Activated CD8-positive, alpha-beta T cell treated with anti-CD3 and anti-CD28 coated beads, Interleukin-2, amount 10 ng/mL, durations not matched to agents 7 days and 5 days (primary cell): ENCODE measurements at regions of chrX and their contacts with region 1.

Region 1: DNA sequence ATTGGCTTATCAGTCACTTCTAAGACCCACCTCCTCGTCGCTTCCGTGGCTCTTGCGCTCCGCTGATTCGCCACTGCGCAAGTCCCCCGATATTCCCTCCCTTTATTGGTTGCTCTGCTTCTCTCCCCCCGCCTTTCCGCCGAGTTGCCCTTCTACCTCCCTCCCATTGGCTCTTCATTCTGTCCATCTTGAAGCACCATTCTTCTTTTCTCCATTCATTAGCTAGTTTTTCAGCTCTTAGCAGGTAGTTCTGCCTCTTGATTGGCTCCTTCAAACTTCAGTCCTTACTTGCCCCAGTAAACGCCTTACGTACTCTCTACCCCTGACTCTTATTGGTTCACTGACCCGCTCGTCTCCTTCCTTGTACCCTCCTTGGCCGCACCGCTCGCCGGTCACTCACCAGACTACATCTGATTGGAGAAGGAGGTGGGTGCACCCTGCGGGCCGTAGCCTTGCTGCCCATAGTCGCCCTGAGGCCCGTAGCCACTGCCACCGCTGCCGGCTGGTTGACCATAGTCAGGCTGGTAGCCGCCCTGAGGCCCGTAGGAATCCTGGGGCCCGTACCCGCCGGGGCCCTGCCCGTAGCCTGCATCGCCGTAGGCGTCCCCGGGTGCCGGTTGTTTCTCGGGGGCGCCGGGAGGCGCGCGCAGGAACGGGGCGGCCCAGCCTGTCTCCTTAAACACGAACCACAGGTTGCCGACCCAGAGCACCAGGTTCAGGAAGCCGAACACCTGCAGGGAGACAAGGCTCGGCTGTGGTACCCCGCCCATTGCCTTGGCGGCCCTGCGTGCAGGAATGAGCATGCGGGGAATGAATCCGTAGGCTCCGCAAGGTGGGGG is 5.1 kb upstream of the PRICKLE3 start:
- DNase-seq: peak; percentile 93
- ATAC-seq: peak; percentile 94
- H3K4me3 Mint-ChIP-seq: peak overlapping the region; percentile 89
- H3K27ac Mint-ChIP-seq: peak overlapping the region; percentile 93
- H3K4me1 Mint-ChIP-seq: peaks cover 45% of the 10 kb centered on the region
- H3K27me3 Mint-ChIP-seq: no peaks in the 10 kb centered on the region

Region 2: GRCh38 chrX:49133759-49134158 is 57.5 kb before region 1 on chrX:
- CTCF ChIA-PET with region 1: no interaction called
- POLR2A ChIA-PET with region 1: no interaction called
- DNase-seq: no peak
- ATAC-seq: no peak
- H3K4me3 Mint-ChIP-seq: no peak overlapping the region
- H3K27ac Mint-ChIP-seq: no peak overlapping the region
- H3K4me1 Mint-ChIP-seq: no peaks in the 10 kb centered on the region
- H3K27me3 Mint-ChIP-seq: no peaks in the 10 kb centered on the region

Region 3: GRCh38 chrX:49165901-49166881 is 25.1 kb before region 1 on chrX:
- CTCF ChIA-PET with region 1: interaction called, 13 read pairs
- POLR2A ChIA-PET with region 1: no interaction called
- DNase-seq: peak; percentile 85
- ATAC-seq: peak; percentile 58
- H3K4me3 Mint-ChIP-seq: peak overlapping the region; percentile 77
- H3K27ac Mint-ChIP-seq: peak overlapping the region; percentile 98
- H3K4me1 Mint-ChIP-seq: peaks cover 45% of the 10 kb centered on the region
- H3K27me3 Mint-ChIP-seq: no peaks in the 10 kb centered on the region

Region 4: GRCh38 chrX:49202022-49202421 is 10.8 kb after region 1 on chrX:
- CTCF ChIA-PET with region 1: interaction called, 13 read pairs
- POLR2A ChIA-PET with region 1: no interaction called
- DNase-seq: no peak
- ATAC-seq: no peak
- H3K4me3 Mint-ChIP-seq: no peak overlapping the region
- H3K27ac Mint-ChIP-seq: no peak overlapping the region
- H3K4me1 Mint-ChIP-seq: peaks cover 23% of the 10 kb centered on the region
- H3K27me3 Mint-ChIP-seq: no peaks in the 10 kb centered on the region

Region 5: GRCh38 chrX:49230469-49231232 is 39.4 kb after region 1 on chrX:
- CTCF ChIA-PET with region 1: interaction called, 14 read pairs
- POLR2A ChIA-PET with region 1: no interaction called
- DNase-seq: peak; percentile 79
- ATAC-seq: peak; percentile 77
- H3K4me3 Mint-ChIP-seq: peak overlapping the region; percentile 75
- H3K27ac Mint-ChIP-seq: peak overlapping the region; percentile 92
- H3K4me1 Mint-ChIP-seq: peaks cover 30% of the 10 kb centered on the region
- H3K27me3 Mint-ChIP-seq: no peaks in the 10 kb centered on the region

Region 6: GRCh38 chrX:49269010-49269767 is 77.9 kb after region 1 on chrX:
- CTCF ChIA-PET with region 1: interaction called, 14 read pairs
- POLR2A ChIA-PET with region 1: interaction called, 6 read pairs
- DNase-seq: peak; percentile 96
- ATAC-seq: peak; percentile 86
- H3K4me3 Mint-ChIP-seq: peak overlapping the region; percentile 82
- H3K27ac Mint-ChIP-seq: peak overlapping the region; percentile 99
- H3K4me1 Mint-ChIP-seq: peaks cover 56% of the 10 kb centered on the region
- H3K27me3 Mint-ChIP-seq: no peaks in the 10 kb centered on the region

Region 7: GRCh38 chrX:49754233-49754857 is 563.1 kb after region 1 on chrX:
- CTCF ChIA-PET with region 1: interaction called, 11 read pairs
- POLR2A ChIA-PET with region 1: no interaction called
- DNase-seq: peak; percentile 60
- ATAC-seq: peak; percentile 55
- H3K4me3 Mint-ChIP-seq: no peak overlapping the region
- H3K27ac Mint-ChIP-seq: no peak overlapping the region
- H3K4me1 Mint-ChIP-seq: no peaks in the 10 kb centered on the region
- H3K27me3 Mint-ChIP-seq: peaks cover 17% of the 10 kb centered on the region